Lower leg skin (tissue), 4 donors: ENCODE measurements at regions of chr16 and their contacts with region 1.

Region 1: GRCh38 chr16:30844671-30845449 is 49.0 kb downstream of the BCL7C start:
- DNase-seq: peak; percentile 83 to 87
- H3K4me3 ChIP-seq: no peak overlapping the region
- CTCF ChIP-seq: peak in 1 of 3 donors; percentile 84
- POLR2A ChIP-seq: no peak

Region 2: GRCh38 chr16:30920891-30921290 is 76.0 kb after region 1 on chr16:
- intact Hi-C with region 1: loop called (anchors 1 kb)
- DNase-seq: no peak
- H3K4me3 ChIP-seq: no peak overlapping the region
- CTCF ChIP-seq: no peak
- POLR2A ChIP-seq: no peak